Psoas muscle (tissue), 8 donors: ENCODE measurements at regions of chrX and their contacts with region 1.

Region 1: GRCh38 chrX:110412971-110413721 is 54.5 kb downstream of the RTL9 start:
- DNase-seq: peak; percentile 68 to 79
- ATAC-seq: peak; percentile 87 to 96 (median 91)
- H3K4me3 ChIP-seq: peak overlapping the region; percentile 41
- H3K27ac ChIP-seq: no peak overlapping the region
- H3K4me1 ChIP-seq: no peaks in the 10 kb centered on the region
- H3K27me3 ChIP-seq: peaks cover 0 to 20% (median 0%) of the 10 kb centered on the region in 3 donors
- CTCF ChIP-seq: peak; percentile 81

Region 2: DNA sequence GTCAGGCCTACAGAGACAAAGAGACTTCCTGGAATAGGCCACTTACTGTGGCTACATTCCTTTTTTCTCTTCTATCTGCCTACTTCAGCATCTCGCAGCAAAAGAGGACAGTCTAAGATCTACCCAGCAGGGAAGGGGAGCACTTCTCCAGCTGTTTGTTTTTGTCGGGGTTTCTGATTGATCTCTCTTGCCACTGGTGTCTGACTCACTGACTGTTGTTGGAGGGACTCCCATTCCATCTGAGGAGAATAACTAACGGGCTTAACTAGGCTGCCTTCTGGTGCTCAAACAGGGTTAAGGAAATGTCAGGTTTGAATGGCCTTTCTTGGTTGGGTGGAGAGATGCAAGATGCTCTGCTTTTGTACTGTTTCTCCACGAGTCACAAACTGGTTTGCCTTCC is 510.5 kb before region 1 on chrX:
- intact Hi-C with region 1: loop called in 1 of 2 experiments (anchors 10 kb)
- DNase-seq: no peak
- ATAC-seq: no peak
- H3K4me3 ChIP-seq: no peak overlapping the region
- H3K27ac ChIP-seq: no peak overlapping the region
- H3K4me1 ChIP-seq: no peaks in the 10 kb centered on the region
- H3K27me3 ChIP-seq: peaks cover 0 to 4% (median 0%) of the 10 kb centered on the region in 3 donors
- CTCF ChIP-seq: no peak